Heart right ventricle (tissue), 16 donors: ENCODE measurements at regions of chr1 and their contacts with region 1.

Region 1: GRCh38 chr1:157517016-157517415 is 35.3 kb downstream of the FCRL5 start:
- DNase-seq: no peak
- ATAC-seq: no peak
- H3K4me3 ChIP-seq: no peak overlapping the region
- H3K27ac ChIP-seq: no peak overlapping the region
- H3K4me1 ChIP-seq: no peaks in the 10 kb centered on the region
- H3K27me3 ChIP-seq: peaks cover 0 to 25% (median 10%) of the 10 kb centered on the region in 7 donors
- CTCF ChIP-seq: no peak

Region 2: GRCh38 chr1:157415661-157416060 is 101.4 kb before region 1 on chr1:
- intact Hi-C with region 1: no loop called
- DNase-seq: no peak
- ATAC-seq: no peak
- H3K4me3 ChIP-seq: no peak overlapping the region
- H3K27ac ChIP-seq: no peak overlapping the region
- H3K4me1 ChIP-seq: no peaks in the 10 kb centered on the region
- H3K27me3 ChIP-seq: peaks cover 0 to 10% (median 4%) of the 10 kb centered on the region in 7 donors
- CTCF ChIP-seq: no peak

Region 3: GRCh38 chr1:157472056-157472698 is 44.8 kb before region 1 on chr1:
- intact Hi-C with region 1: loop called in 1 of 10 experiments (anchors 5 kb)
- DNase-seq: no peak
- ATAC-seq: no peak
- H3K4me3 ChIP-seq: no peak overlapping the region
- H3K27ac ChIP-seq: no peak overlapping the region
- H3K4me1 ChIP-seq: no peaks in the 10 kb centered on the region
- H3K27me3 ChIP-seq: peaks cover 0 to 9% (median 0%) of the 10 kb centered on the region in 7 donors
- CTCF ChIP-seq: no peak